IMR-90 (cell line): ENCODE measurements at regions of chr4 and their contacts with region 1.

Region 1: GRCh38 chr4:40672536-40673526 is 43.2 kb upstream of the RBM47 start:
- DNase-seq: peak; percentile 99
- ATAC-seq: peak; percentile 98
- H3K4me3 ChIP-seq: no peak overlapping the region
- H3K27ac ChIP-seq: peak overlapping the region; percentile 87
- H3K4me1 ChIP-seq: peaks cover 11% of the 10 kb centered on the region
- H3K27me3 ChIP-seq: no peaks in the 10 kb centered on the region
- CTCF ChIP-seq: no peak
- POLR2A ChIP-seq: no peak
- RAD21 ChIP-seq: no peak

Region 2: DNA sequence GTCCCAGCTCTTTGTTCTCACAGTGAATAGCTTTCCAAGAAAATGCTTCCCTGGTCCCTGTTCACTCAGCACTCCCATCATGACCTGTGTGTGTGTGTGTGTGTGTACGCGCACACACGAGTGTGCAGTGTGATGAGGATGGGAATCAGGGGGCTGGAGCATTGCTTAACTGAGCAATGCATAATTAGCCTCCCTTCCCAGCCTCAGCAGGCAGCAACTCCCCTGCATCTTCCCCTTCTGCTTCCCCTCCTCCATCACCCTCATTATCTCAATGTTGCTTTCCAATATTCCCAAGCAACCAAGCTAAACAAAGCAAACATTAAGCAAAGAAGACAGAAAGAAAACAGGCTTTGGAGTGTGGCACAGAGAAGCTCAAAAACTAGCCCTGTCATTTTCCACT is 180.1 kb before region 1 on chr4:
- CTCF ChIA-PET with region 1: no interaction called
- POLR2A ChIA-PET with region 1: no interaction called
- dilution Hi-C with region 1: no loop called
- in situ Hi-C with region 1: no loop called
- intact Hi-C with region 1: no loop called
- DNase-seq: no peak
- ATAC-seq: no peak
- H3K4me3 ChIP-seq: no peak overlapping the region
- H3K27ac ChIP-seq: no peak overlapping the region
- H3K4me1 ChIP-seq: peaks cover 3% of the 10 kb centered on the region; the same call in 1 of the 2 replicates
- H3K27me3 ChIP-seq: no peaks in the 10 kb centered on the region; the same call in 1 of the 2 replicates
- CTCF ChIP-seq: no peak
- POLR2A ChIP-seq: no peak
- RAD21 ChIP-seq: no peak

Region 3: GRCh38 chr4:40687676-40688389 is 15.0 kb after region 1 on chr4:
- CTCF ChIA-PET with region 1: interaction called, 3 read pairs
- POLR2A ChIA-PET with region 1: interaction called, 18 read pairs
- dilution Hi-C with region 1: no loop called
- in situ Hi-C with region 1: no loop called
- intact Hi-C with region 1: no loop called
- DNase-seq: no peak
- ATAC-seq: no peak
- H3K4me3 ChIP-seq: no peak overlapping the region
- H3K27ac ChIP-seq: no peak overlapping the region
- H3K4me1 ChIP-seq: no peaks in the 10 kb centered on the region
- H3K27me3 ChIP-seq: no peaks in the 10 kb centered on the region
- CTCF ChIP-seq: no peak
- POLR2A ChIP-seq: no peak
- RAD21 ChIP-seq: no peak

Region 4: DNA sequence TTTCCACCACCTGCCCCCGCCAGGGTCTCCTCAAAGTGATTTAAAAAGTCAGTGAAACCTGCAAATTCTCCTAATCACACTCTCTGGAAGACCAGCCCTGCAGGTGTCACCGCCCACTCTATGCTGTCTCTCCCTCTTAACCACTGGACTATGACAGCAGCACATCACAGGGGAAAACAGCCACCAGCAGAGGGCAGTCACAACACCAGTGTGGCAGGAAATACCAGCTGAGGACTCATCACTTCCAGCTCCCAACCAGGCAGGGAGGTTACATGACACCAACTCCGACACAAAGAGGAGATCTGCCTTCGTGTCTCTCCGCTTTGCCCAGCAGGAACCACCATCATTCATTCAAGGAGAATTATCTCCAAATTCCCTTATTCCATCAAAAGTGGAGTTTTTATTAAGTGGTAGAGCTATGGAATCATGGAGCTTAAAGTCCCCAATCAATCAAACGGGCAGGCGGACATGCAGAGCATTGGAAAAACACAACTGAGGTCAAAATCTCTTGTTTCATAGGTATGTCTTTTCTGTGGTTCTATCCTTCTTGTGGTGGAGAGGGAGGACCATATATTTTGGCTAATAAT is 168.2 kb after region 1 on chr4:
- CTCF ChIA-PET with region 1: no interaction called
- POLR2A ChIA-PET with region 1: no interaction called
- dilution Hi-C with region 1: no loop called
- in situ Hi-C with region 1: no loop called
- intact Hi-C with region 1: no loop called
- DNase-seq: peak; percentile 90
- ATAC-seq: peak; percentile 93
- H3K4me3 ChIP-seq: no peak overlapping the region
- H3K27ac ChIP-seq: no peak overlapping the region
- H3K4me1 ChIP-seq: no peaks in the 10 kb centered on the region
- H3K27me3 ChIP-seq: no peaks in the 10 kb centered on the region
- CTCF ChIP-seq: peak; percentile 80
- POLR2A ChIP-seq: no peak
- RAD21 ChIP-seq: peak; percentile 57